Naive thymus-derived CD4-positive, alpha-beta T cell (primary cell): ENCODE measurements at regions of chr1 and their contacts with region 1.

Region 1: GRCh38 chr1:170074250-170075157 is at the start of gene KIFAP3:
- DNase-seq: peak; percentile 84 to 94 (median 92)
- ATAC-seq: peak; percentile 96
- H3K4me3 ChIP-seq: peak within 1 kb of the TSS; percentile 76
- H3K4me3 Mint-ChIP-seq: peak within 1 kb of the TSS; percentile 89 to 99 (median 96)
- H3K27ac ChIP-seq: peak within 1 kb of the TSS; percentile 90
- H3K27ac Mint-ChIP-seq: peak within 1 kb of the TSS; percentile 83 to 98 (median 94)
- H3K4me1 ChIP-seq: peaks cover 15 to 37% of the 10 kb centered on the region in 2 donors
- H3K4me1 Mint-ChIP-seq: peaks cover 34 to 65% (median 57%) of the 10 kb centered on the region in 7 donors
- H3K27me3 ChIP-seq: no peaks in the 10 kb centered on the region
- H3K27me3 Mint-ChIP-seq: peaks cover 0 to 3% (median 0%) of the 10 kb centered on the region in 5 donors
- total RNA-seq, gene KIFAP3: 12.8 to 23.8 (median 20.1) TPM

Region 2: DNA sequence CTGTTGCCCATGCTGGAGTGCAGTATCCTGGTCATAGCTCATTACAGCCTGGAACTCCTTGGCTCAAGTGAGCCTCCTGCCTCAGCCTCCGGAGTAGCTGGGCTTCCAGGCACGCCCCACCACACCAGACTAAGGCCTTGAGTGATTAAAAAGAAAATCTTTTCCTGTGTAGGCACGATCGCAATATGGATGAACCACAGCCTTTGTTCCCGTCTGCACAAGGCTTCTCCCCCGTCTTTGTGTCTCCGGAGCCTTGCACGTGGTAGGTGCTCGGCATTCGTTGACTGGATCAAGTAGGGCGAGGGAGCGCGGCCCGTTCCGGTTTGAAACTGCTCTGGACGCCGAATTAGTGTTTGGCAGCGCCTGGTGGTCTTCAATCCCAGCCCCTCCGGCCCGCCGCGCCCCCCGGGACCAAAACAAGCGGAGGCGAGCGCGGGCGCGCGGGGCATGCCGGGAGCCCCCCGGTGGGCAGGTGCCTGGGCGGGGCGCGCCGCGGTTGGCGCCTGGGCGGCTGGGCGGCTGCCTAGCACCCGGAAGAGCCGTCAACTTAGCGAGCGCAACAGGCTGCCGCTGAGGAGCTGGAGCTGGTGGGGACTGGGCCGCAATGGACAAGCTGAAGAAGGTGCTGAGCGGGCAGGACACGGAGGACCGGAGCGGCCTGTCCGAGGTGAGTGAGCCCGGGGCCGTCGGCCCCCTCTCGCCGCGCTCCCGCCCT is 1848.9 kb before region 1 on chr1 and contains the start of gene SFT2D2:
- CTCF ChIA-PET with region 1: no interaction called
- POLR2A ChIA-PET with region 1: no interaction called
- intact Hi-C with region 1: loop called in 1 of 2 experiments (anchors 1 kb)
- DNase-seq: peak; percentile 71 to 86 (median 83)
- ATAC-seq: peak; percentile 97
- H3K4me3 ChIP-seq: peak within 1 kb of the TSS; percentile 88
- H3K4me3 Mint-ChIP-seq: peak within 1 kb of the TSS; percentile 92 to 98 (median 96)
- H3K27ac ChIP-seq: peak within 1 kb of the TSS; percentile 85
- H3K27ac Mint-ChIP-seq: peak within 1 kb of the TSS; percentile 81 to 98 (median 92)
- H3K4me1 ChIP-seq: peaks cover 14 to 15% of the 10 kb centered on the region in 2 donors
- H3K4me1 Mint-ChIP-seq: peaks cover 30 to 56% (median 45%) of the 10 kb centered on the region in 7 donors
- H3K27me3 ChIP-seq: no peaks in the 10 kb centered on the region
- H3K27me3 Mint-ChIP-seq: peaks cover 0 to 7% (median 4%) of the 10 kb centered on the region in 5 donors
- total RNA-seq, gene SFT2D2: 46.9 to 79.8 (median 51.3) TPM

Region 3: GRCh38 chr1:170126696-170127095 is 52.2 kb after region 1 on chr1:
- CTCF ChIA-PET with region 1: no interaction called
- POLR2A ChIA-PET with region 1: no interaction called
- intact Hi-C with region 1: loop called in 1 of 2 experiments (anchors 10 kb)
- DNase-seq: no peak
- ATAC-seq: no peak
- H3K4me3 ChIP-seq: no peak overlapping the region
- H3K4me3 Mint-ChIP-seq: no peak overlapping the region
- H3K27ac ChIP-seq: no peak overlapping the region
- H3K27ac Mint-ChIP-seq: no peak overlapping the region
- H3K4me1 ChIP-seq: no peaks in the 10 kb centered on the region
- H3K4me1 Mint-ChIP-seq: peaks cover 0 to 7% (median 0%) of the 10 kb centered on the region in 7 donors
- H3K27me3 ChIP-seq: no peaks in the 10 kb centered on the region
- H3K27me3 Mint-ChIP-seq: peaks cover 0 to 19% (median 8%) of the 10 kb centered on the region in 5 donors

Region 4: DNA sequence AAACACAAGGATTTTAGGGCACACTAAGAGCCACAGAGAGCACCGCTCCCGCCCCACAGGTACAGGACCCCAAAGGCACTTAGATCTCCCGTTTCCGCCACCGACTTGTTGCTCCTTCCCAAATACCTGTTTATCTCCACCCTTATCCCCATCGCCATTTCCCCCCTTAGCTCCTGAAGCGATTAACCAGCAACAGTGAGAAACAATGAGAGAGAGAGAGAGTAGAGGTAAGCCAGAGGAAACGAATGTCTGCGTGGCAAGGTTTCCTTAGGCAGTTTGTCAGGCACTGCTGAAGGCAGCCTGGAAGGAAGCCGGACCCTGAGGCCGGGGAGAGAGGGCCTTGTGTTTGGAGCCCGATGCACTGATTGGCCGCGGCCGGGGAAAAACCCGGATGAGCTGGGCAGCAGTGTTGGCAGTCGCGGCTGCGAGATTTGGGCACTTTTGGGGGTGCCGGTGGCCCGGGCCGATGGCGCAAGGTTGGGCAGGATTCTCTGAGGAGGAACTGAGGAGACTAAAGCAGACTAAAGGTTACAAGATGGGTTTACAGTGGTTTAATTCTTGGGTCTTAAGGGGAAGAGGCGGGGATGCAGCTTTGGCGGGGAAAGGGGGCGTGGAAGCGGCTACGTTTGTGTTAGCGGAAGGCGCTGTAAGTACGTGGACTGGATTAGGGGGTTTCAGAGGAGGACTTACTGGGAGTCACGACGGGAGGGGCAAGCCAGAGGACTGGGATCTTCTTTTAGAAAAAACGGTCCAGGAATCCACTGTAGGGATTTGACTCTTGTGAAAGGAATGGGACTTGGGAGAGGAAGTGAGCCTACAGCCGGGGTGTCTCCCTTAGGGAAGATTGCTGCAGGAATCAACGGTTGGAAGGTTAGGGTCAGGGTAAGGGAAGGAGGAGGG is 457.5 kb after region 1 on chr1 and contains the start of gene GORAB:
- CTCF ChIA-PET with region 1: no interaction called
- POLR2A ChIA-PET with region 1: interaction called, 7 read pairs
- intact Hi-C with region 1: loop called (anchors 1 kb)
- DNase-seq: peak; percentile 74 to 87 (median 83)
- ATAC-seq: peak; percentile 97
- H3K4me3 ChIP-seq: peak within 1 kb of the TSS; percentile 95
- H3K4me3 Mint-ChIP-seq: no peak within 1 kb of the TSS
- H3K27ac ChIP-seq: peak within 1 kb of the TSS; percentile 91
- H3K27ac Mint-ChIP-seq: peak within 1 kb of the TSS in 1 of 9 donors; percentile 36
- H3K4me1 ChIP-seq: peaks cover 8 to 14% of the 10 kb centered on the region in 2 donors
- H3K4me1 Mint-ChIP-seq: peaks cover 7 to 29% (median 19%) of the 10 kb centered on the region in 7 donors
- H3K27me3 ChIP-seq: no peaks in the 10 kb centered on the region
- H3K27me3 Mint-ChIP-seq: peaks cover 0 to 20% (median 0%) of the 10 kb centered on the region in 5 donors
- total RNA-seq, gene GORAB: 10.9 to 25.3 (median 22.7) TPM